ENCODE measurements at regions of chr10 and their contacts with region 1.

Region 1: DNA sequence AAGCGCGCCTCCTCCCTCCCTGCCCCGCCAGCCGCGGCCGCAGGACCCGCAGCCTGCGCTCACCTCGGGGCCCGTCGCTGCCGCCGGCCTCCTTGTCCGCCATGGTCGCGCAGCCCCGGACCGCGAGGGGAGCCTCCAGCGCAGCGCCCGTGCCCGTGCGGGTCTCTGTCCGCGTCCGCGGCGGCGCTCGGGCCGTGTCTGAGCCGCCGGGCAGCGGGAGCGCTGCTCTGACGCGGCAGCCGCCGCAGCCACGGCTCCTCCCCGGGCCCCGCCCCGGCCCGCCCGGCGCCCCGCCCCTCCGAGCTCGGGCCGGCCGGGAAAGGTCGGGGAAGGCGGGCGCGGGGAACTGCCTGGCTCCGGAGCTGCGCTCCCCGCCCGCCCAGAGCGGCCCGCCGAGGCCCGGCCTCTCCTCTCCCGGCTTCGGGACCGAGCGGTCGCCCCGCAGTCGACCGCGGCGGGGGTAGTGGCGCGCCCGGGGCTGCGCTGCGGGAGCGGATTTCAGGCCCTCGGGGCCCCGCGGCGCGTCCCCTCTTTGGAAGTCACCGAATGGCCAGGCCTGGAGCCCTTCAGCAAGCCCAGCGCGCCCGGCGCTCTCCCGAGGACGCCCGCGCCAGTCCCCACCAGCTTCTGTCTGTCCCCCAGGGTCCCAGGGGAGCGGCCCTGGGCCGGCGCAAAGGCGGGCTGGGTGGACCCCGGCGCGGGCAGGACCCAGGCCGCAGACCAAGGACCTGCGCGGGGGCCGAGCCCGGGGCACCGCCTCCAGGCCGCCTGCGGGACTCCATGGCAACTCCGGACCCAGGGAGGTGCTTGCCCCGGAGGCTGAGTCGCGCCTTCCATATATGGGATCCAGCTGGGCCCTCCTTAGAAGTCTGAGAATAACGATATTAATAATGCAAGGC is at the start of gene HSPA12A:
- DNase-seq: peak; percentile 77 to 78
- ATAC-seq: peak; percentile 85 to 88
- H3K4me3 ChIP-seq: peak within 1 kb of the TSS; percentile 59 to 85 (median 76)
- H3K27ac ChIP-seq: peak within 1 kb of the TSS; percentile 85 to 96 (median 94)
- H3K4me1 ChIP-seq: peaks cover 0 to 4% of the 10 kb centered on the region in 2 donors
- H3K27me3 ChIP-seq: no peaks in the 10 kb centered on the region
- CTCF ChIP-seq: no peak
- POLR2A ChIP-seq: peak; percentile 94 to 95
- total RNA-seq, gene HSPA12A: 4.5 to 6.0 (median 4.9) TPM

Region 2: DNA sequence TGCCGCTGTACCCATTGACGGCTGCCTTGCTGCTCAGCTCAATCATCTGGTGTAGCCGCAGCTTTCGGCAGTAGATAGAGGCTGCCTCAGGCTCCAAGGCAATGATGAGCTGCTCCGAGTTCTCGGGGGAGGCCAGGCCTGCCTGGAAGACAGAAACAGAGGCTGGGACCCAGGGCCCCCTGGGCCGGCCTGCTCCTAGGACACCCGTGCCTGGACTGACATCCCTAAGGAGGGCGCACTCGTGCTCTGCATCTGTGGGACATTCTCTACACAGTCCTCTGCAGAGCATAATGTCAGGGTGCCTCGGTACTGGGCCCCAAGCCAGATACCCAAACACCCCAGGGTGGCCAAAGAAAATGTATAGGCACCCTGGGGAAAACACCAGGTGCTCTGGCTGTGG is 58.8 kb before region 1 on chr10:
- in situ Hi-C with region 1: no loop called
- intact Hi-C with region 1: loop called (anchors 2 kb)
- DNase-seq: no peak
- ATAC-seq: no peak
- H3K4me3 ChIP-seq: no peak overlapping the region
- H3K27ac ChIP-seq: no peak overlapping the region
- H3K4me1 ChIP-seq: peaks cover 0 to 4% of the 10 kb centered on the region in 2 donors
- H3K27me3 ChIP-seq: no peaks in the 10 kb centered on the region
- CTCF ChIP-seq: no peak
- POLR2A ChIP-seq: no peak

Region 3: DNA sequence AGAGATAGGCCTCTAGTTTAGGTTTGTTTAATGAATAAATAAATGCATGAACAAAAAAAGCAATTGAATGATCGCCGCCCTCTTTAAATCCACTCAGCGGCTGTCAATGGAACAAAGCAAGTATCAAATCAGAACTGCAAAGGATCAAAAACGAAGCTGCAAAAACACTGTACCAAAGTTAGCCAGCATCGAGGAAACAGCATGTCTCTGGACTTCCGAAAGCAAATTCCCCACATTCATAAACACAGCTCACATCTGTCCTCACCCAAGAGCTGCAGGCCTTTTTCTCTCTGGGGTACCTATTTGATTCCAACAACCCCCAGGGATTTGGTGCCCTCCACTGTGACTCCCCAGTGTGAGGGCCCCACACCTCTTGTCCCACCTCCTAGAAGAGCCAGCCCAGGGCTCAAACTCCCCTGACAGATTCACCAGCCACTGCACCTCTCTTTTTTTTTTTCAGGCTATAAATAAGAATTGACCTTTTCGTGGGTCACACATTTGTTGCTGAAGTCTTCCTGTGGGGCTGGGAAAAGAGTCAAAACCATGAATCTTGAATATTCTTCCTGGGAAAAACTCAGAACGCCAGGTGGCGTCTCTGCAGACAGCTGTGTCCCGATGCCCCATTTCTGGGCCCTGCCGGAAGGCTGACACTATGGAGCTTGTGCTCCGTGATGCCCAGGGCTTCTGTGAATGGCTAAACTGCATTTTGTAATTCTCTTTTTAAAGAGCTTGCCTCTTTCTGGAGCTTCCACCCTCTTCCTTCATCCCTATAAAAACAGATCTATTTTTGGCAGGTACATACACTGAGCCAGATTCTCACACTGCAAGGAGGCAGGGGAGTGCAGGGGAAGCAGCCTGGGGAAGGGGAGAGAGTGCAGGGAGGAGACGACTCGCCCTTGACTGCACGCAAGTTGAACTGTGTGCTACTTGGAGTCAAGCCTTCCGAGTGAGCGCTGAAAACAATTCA is 52.0 kb before region 1 on chr10:
- in situ Hi-C with region 1: no loop called
- intact Hi-C with region 1: loop called (anchors 5 kb)
- DNase-seq: no peak
- ATAC-seq: peak; percentile 47 to 62
- H3K4me3 ChIP-seq: no peak overlapping the region
- H3K27ac ChIP-seq: peak overlapping the region in 2 of 4 donors; percentile 9 to 10
- H3K4me1 ChIP-seq: peaks cover 8 to 10% of the 10 kb centered on the region in 2 donors
- H3K27me3 ChIP-seq: no peaks in the 10 kb centered on the region
- CTCF ChIP-seq: peak in 2 of 5 experiments; percentile 13 to 48
- POLR2A ChIP-seq: no peak

Region 4: DNA sequence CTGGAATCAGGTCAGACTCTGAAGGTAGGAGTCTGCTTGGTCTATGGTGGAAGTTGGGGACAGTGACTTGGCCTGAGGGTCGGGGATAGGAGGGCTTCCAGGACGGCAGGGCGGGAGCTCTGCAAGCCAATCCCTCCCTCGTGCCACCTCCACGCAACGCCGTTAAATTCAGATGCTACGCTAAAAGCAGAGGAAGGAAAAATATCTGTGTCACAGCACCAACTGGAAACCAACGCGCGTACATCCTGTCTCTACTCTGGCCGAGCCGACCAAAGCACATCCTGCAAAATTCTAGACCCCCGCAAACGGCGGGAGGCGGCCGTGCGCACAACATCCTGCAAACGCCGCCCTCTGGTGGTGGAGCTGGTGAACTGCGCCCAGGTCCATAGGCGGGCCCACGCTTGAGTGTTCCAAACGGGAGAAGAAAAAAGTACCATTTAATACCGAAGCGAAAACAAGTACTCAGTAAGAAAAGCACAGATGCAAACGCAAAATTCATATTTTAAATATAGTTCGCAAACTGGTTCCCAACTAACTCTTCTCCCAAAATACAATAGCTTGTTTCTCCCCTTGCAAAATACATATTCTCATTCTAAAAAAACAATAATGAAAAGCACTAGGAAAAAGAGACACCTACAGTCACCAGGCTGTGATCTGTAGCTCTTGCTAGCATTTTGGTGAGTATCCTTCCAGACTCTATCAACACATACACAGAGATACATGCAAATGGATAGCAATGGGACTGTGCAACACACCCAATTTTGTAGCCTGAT is 45.5 kb after region 1 on chr10:
- in situ Hi-C with region 1: no loop called
- intact Hi-C with region 1: loop called (anchors 5 kb)
- DNase-seq: peak; percentile 30 to 41
- ATAC-seq: peak; percentile 62 to 65
- H3K4me3 ChIP-seq: peak overlapping the region; percentile 4 to 34 (median 31)
- H3K27ac ChIP-seq: no peak overlapping the region
- H3K4me1 ChIP-seq: peaks cover 3 to 8% of the 10 kb centered on the region in 2 donors
- H3K27me3 ChIP-seq: no peaks in the 10 kb centered on the region
- CTCF ChIP-seq: peak; percentile 88 to 99 (median 92)
- POLR2A ChIP-seq: no peak

Region 5: DNA sequence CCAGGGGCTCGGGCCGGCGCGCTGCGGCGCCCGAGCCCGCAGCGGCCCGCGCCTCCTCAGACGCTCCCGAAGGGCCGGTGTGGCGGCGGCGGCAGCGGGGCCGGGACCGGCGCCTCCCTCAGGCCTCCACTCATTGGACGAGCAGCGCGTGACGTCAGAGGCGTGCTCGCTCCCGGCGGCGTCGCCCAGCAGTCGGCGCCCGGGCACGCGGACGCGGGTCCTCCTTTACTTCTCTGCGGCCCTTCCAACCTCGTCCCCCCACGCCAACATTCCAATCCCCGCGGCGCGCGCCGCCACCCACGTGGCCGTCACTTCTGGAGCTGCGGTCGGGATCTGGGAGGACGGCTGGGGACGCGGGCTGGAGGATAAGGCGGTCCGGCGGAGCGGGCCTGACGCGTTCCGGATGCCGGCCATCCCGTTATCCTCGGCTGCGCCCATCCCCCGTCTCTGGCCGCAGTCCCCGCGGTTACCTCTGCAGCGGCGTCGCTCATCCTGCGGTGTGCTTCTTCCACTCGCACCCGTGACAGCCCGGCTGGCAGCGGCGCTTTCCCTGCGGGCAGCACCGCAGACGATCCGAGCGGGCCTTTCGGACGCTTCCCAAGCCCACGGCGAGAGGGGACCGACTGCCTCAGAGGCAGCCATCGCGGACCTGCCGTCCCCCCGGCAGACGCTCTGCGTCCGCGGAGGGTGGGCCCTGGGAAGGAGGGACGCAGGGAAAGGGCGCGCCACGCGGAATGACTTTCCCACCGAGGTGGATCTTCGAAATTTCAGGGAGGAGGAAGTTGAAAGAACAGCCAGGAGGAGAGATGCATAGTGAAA is 633.0 kb after region 1 on chr10 and contains the start of gene PDZD8:
- in situ Hi-C with region 1: no loop called
- intact Hi-C with region 1: loop called (anchors 2 kb)
- DNase-seq: peak; percentile 87 to 89
- ATAC-seq: peak; percentile 90 to 91
- H3K4me3 ChIP-seq: peak within 1 kb of the TSS; percentile 84 to 96 (median 95)
- H3K27ac ChIP-seq: peak within 1 kb of the TSS; percentile 87 to 94 (median 92)
- H3K4me1 ChIP-seq: peaks cover 29 to 31% of the 10 kb centered on the region in 2 donors
- H3K27me3 ChIP-seq: peaks cover 0 to 2% (median 0%) of the 10 kb centered on the region in 3 donors
- CTCF ChIP-seq: peak in 1 of 5 experiments; percentile 12
- POLR2A ChIP-seq: peak; percentile 90 to 94
- total RNA-seq, gene PDZD8: 15.9 to 25.0 (median 18.1) TPM

Region 6: GRCh38 chr10:118046395-118047156 is 1304.0 kb after region 1 on chr10 and contains the start of gene RAB11FIP2:
- in situ Hi-C with region 1: no loop called
- intact Hi-C with region 1: loop called (anchors 10 kb)
- DNase-seq: peak; percentile 92 to 93
- ATAC-seq: peak; percentile 92 to 93
- H3K4me3 ChIP-seq: peak within 1 kb of the TSS; percentile 74 to 92 (median 78)
- H3K27ac ChIP-seq: peak within 1 kb of the TSS; percentile 87 to 96 (median 92)
- H3K4me1 ChIP-seq: peaks cover 36 to 48% of the 10 kb centered on the region in 2 donors
- H3K27me3 ChIP-seq: no peaks in the 10 kb centered on the region
- CTCF ChIP-seq: peak in 1 of 5 experiments; percentile 14
- POLR2A ChIP-seq: peak; percentile 72 to 81
- total RNA-seq, gene RAB11FIP2: 9.6 to 15.5 (median 11.3) TPM

Measured in gastrocnemius medialis (tissue), 4 donors.